B cell (primary cell): ENCODE measurements at regions of chr19 and their contacts with region 1.

Region 1: DNA sequence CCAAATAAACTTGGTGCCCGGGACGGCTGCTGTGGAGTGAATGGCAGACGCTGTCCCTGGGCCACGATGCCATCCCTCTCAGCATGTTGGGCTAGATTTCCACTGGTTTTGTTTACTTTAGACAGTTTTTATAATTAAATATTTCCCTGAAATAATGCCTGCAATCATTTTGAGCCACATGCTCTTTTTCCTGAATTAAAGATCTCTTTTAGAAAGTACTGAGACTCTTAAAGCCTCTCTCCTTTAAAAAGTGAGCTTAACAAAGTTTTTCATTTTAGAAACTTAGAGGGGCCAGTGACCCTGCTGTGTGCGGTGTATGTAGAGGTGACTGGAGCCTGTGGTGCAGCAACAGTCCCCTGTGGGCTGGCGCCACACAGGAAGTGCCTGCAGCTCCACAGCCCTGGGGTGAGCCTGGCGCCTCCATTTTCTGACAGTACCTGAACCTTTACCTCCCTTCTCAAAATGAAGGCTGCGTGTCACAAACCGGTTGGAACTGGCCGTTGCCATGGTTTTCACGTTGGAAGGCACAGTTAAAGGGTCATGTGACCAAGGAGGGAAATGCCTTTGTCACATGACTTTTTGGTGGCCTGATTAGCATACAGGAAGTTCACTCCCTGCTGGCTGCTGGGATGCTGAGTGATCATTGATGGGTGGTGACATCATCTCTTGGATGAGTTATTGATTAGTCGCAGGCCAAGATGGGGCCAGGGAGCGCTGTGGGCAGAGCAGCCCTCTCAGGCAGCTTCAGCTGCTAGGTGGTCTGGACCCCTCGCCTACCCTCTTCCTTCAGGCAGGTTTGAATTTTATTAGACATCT is 26.3 kb downstream of the TSSK6 start:
- DNase-seq: peak; percentile 90
- ATAC-seq: peak; percentile 63
- H3K4me3 ChIP-seq: peak overlapping the region in 1 of 5 experiments; percentile 32
- H3K4me3 Mint-ChIP-seq: peak overlapping the region; percentile 73
- H3K27ac ChIP-seq: peak overlapping the region; percentile 79 to 81
- H3K27ac Mint-ChIP-seq: peak overlapping the region; percentile 98
- H3K4me1 ChIP-seq: peaks cover 37 to 53% of the 10 kb centered on the region in 2 donors
- H3K4me1 Mint-ChIP-seq: peaks cover 56% of the 10 kb centered on the region
- H3K27me3 ChIP-seq: no peaks in the 10 kb centered on the region
- H3K27me3 Mint-ChIP-seq: no peaks in the 10 kb centered on the region
- CTCF ChIP-seq: no peak

Region 2: DNA sequence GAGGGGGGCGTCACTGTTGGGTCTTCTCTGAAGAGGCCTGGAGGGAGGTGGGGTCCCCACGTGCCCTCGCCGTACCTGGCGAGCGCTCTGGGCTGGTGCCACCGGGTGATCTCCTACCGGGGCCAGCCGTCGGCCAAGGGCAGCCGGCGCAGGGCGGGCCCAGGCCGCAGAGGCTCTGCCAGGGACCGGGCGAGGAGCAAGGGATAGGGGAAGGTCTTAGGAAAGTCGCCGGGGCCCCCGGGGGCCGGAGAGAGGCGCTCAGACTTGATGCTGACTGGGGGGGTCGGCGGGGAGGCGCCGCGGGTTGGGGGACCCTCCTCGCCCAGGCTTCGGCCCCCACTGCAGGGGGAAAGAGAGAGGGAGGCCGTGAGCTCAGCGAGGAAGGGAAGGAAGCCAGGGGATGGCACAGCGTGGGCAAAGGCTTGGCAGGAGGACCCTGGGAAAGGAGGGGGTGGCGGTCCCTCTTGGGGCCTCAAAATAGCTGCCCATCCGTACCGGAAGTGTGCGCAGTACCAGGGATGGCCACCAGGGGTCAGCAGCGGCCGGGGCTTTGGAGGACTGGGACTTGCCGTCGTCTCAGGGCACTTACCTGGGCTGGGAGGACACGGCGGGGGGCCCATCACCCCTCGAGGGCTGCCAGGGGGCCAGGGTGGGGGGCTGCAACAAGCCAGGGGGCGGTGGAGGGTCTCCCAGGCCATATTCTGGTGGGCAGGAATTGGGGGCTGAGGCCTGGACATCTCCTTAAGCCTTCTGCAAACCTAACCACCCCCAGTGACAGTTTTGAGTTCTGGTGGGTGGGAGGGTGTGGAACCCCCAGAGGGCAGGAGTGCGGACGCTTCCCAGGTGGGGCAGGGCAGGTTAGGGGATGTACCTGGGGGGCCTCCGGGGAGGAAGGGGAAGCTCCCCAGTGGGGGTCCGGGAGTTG is 343.1 kb before region 1 on chr19:
- CTCF ChIA-PET with region 1: interaction called, 17 read pairs
- POLR2A ChIA-PET with region 1: no interaction called
- intact Hi-C with region 1: no loop called
- DNase-seq: peak; percentile 86
- ATAC-seq: peak; percentile 96
- H3K4me3 ChIP-seq: no peak overlapping the region
- H3K4me3 Mint-ChIP-seq: no peak overlapping the region
- H3K27ac ChIP-seq: no peak overlapping the region
- H3K27ac Mint-ChIP-seq: no peak overlapping the region
- H3K4me1 ChIP-seq: peaks cover 6 to 12% of the 10 kb centered on the region in 2 donors
- H3K4me1 Mint-ChIP-seq: peaks cover 9% of the 10 kb centered on the region
- H3K27me3 ChIP-seq: no peaks in the 10 kb centered on the region
- H3K27me3 Mint-ChIP-seq: no peaks in the 10 kb centered on the region
- CTCF ChIP-seq: peak; percentile 83

Region 3: DNA sequence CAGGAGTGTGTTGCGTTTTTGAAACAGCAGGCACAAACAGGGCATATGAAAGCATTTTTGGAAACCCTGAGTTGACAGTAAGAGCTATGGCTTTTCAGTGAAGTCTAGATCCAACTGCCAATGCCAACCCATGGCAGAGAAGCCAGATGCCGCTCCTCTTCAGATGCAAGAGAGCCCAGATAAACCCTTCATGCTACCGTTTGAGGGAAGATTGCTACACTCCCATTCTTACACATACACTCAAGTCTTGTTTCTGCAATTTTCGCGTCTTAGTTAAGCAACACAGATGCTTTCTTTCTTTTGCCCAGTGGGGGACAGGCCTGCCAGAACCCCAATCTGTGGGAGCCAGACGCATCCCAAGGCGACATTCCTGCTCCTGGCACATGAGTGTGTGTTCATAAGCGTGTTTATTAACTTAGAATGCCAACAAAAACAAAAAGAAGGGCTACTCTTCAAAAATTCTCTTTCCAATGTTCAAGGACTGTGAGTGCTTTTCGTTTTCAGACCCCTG is 307.5 kb before region 1 on chr19:
- CTCF ChIA-PET with region 1: no interaction called
- POLR2A ChIA-PET with region 1: no interaction called
- intact Hi-C with region 1: no loop called
- DNase-seq: no peak
- ATAC-seq: no peak
- H3K4me3 ChIP-seq: no peak overlapping the region
- H3K4me3 Mint-ChIP-seq: no peak overlapping the region
- H3K27ac ChIP-seq: no peak overlapping the region
- H3K27ac Mint-ChIP-seq: no peak overlapping the region
- H3K4me1 ChIP-seq: peaks cover 0 to 11% of the 10 kb centered on the region in 2 donors
- H3K4me1 Mint-ChIP-seq: peaks cover 7% of the 10 kb centered on the region
- H3K27me3 ChIP-seq: no peaks in the 10 kb centered on the region
- H3K27me3 Mint-ChIP-seq: no peaks in the 10 kb centered on the region
- CTCF ChIP-seq: no peak

Region 4: GRCh38 chr19:19320362-19321142 is 168.5 kb before region 1 on chr19 and contains the starts of genes MAU2 and SUGP1:
- CTCF ChIA-PET with region 1: interaction called, 5 read pairs
- POLR2A ChIA-PET with region 1: no interaction called
- intact Hi-C with region 1: loop called (anchors 1 kb)
- DNase-seq: peak; percentile 95
- ATAC-seq: peak; percentile 91
- H3K4me3 ChIP-seq: peak within 1 kb of the TSS; percentile 73 to 97 (median 79)
- H3K4me3 Mint-ChIP-seq: peak within 1 kb of the TSS; percentile 96
- H3K27ac ChIP-seq: peak within 1 kb of the TSS; percentile 96
- H3K27ac Mint-ChIP-seq: peak within 1 kb of the TSS; percentile 99
- H3K4me1 ChIP-seq: peaks cover 18 to 31% of the 10 kb centered on the region in 2 donors
- H3K4me1 Mint-ChIP-seq: peaks cover 44% of the 10 kb centered on the region
- H3K27me3 ChIP-seq: no peaks in the 10 kb centered on the region
- H3K27me3 Mint-ChIP-seq: no peaks in the 10 kb centered on the region
- CTCF ChIP-seq: peak; percentile 26
- total RNA-seq, gene MAU2: 199 and 203 TPM in 2 replicates
- total RNA-seq, gene SUGP1: 86.9 and 91.4 TPM in 2 replicates

Region 5: DNA sequence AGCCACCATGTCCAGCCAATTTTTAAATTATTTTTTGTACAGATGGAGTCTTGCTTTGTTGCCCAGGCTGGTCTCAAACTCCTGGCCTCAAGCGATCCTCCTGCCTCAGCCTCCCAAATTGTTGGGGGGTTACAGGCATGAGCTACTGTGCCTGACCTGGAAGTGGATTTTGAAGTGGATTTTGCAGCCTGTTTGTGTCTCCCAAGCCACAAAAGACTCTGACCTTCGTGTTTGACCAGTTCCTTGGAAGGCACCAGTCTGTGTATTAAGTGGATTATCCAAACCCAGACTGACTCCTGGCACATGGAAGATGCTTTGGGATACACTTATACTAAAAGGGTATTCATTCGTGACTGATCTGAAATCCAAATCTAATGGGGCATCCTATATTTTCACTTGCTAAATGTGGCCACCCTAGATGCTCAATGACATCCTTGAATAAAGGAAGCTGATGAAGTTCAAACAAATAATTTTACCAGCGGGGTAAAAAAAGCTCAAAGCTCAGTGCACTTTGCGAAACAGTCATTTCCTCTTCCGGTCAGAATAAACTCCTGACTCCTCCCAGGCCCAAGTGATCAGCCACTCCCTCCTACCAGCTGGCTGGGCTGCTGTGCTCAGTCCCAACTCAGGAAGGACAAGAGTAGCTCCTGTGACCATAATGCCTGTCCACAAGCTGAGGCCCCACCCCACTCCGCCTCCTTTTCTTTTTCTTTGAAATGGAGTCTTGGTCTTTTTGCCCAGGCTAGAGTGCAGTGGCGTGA is 116.2 kb before region 1 on chr19:
- CTCF ChIA-PET with region 1: interaction called, 301 read pairs
- POLR2A ChIA-PET with region 1: interaction called, 3 read pairs
- intact Hi-C with region 1: no loop called
- DNase-seq: peak; percentile 67
- ATAC-seq: peak; percentile 97
- H3K4me3 ChIP-seq: peak overlapping the region; percentile 14 to 49 (median 26)
- H3K4me3 Mint-ChIP-seq: peak overlapping the region; percentile 74
- H3K27ac ChIP-seq: peak overlapping the region; percentile 74 to 82
- H3K27ac Mint-ChIP-seq: peak overlapping the region; percentile 89
- H3K4me1 ChIP-seq: peaks cover 11 to 22% of the 10 kb centered on the region in 2 donors
- H3K4me1 Mint-ChIP-seq: peaks cover 8% of the 10 kb centered on the region
- H3K27me3 ChIP-seq: no peaks in the 10 kb centered on the region
- H3K27me3 Mint-ChIP-seq: no peaks in the 10 kb centered on the region
- CTCF ChIP-seq: no peak

Region 6: GRCh38 chr19:19404879-19405860 is 83.9 kb before region 1 on chr19 and contains the start of gene GATAD2A:
- CTCF ChIA-PET with region 1: interaction called, 91 read pairs
- POLR2A ChIA-PET with region 1: interaction called, 8 read pairs
- intact Hi-C with region 1: loop called (anchors 1 kb)
- DNase-seq: peak; percentile 96
- ATAC-seq: peak; percentile 88
- H3K4me3 ChIP-seq: peak within 1 kb of the TSS; percentile 55 to 86 (median 70)
- H3K4me3 Mint-ChIP-seq: peak within 1 kb of the TSS; percentile 91
- H3K27ac ChIP-seq: peak within 1 kb of the TSS; percentile 55 to 77
- H3K27ac Mint-ChIP-seq: peak within 1 kb of the TSS; percentile 92
- H3K4me1 ChIP-seq: peaks cover 32 to 37% of the 10 kb centered on the region in 2 donors
- H3K4me1 Mint-ChIP-seq: peaks cover 39% of the 10 kb centered on the region
- H3K27me3 ChIP-seq: no peaks in the 10 kb centered on the region
- H3K27me3 Mint-ChIP-seq: no peaks in the 10 kb centered on the region
- CTCF ChIP-seq: peak; percentile 38
- total RNA-seq, gene GATAD2A: 76.3 and 97.3 TPM in 2 replicates

Region 7: GRCh38 chr19:19459707-19460251 is 29.3 kb before region 1 on chr19:
- CTCF ChIA-PET with region 1: no interaction called
- POLR2A ChIA-PET with region 1: interaction called, 3 read pairs
- intact Hi-C with region 1: loop called (anchors 1 kb)
- DNase-seq: peak; percentile 61
- ATAC-seq: peak; percentile 60
- H3K4me3 ChIP-seq: peak overlapping the region; percentile 11 to 47 (median 39)
- H3K4me3 Mint-ChIP-seq: peak overlapping the region; percentile 80
- H3K27ac ChIP-seq: peak overlapping the region; percentile 74 to 81
- H3K27ac Mint-ChIP-seq: peak overlapping the region; percentile 91
- H3K4me1 ChIP-seq: peaks cover 55 to 68% of the 10 kb centered on the region in 2 donors
- H3K4me1 Mint-ChIP-seq: peaks cover 71% of the 10 kb centered on the region
- H3K27me3 ChIP-seq: no peaks in the 10 kb centered on the region
- H3K27me3 Mint-ChIP-seq: no peaks in the 10 kb centered on the region
- CTCF ChIP-seq: no peak

Region 8: DNA sequence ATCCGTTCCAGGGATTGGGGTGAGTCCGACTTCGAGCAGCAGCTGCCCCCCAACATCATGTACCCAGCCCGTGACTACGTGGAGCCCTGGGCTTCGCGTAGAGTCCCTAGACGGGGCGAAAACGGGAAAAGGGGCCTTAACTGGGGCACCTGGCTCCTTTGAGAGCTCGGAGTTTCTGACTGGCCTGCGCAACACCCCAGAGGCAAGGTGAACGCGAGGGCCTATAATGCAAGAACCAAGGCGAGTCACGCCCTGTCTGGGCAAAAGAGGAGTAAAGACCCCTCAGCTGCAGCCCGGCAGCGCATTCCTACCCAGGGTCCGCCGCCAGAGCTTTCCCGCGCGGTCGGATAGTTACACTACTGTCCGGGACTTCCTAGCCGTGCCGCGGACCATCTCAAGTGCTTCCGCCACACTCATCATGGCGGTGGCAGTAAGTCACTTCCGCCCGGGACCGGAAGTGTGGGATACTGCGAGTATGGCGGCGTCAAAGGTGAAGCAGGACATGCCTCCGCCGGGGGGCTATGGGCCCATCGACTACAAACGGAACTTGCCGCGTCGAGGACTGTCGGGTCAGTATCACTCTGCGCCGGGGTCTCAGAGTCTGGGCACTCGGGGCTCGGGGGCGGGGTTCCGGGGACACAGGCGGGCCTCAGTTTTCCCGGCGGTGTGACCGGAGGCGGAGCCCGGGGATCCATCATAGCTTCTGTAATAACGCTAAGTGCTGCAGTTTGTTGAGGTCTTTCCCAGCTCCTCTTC is 26.9 kb after region 1 on chr19 and contains the start of gene NDUFA13:
- CTCF ChIA-PET with region 1: interaction called, 12 read pairs
- POLR2A ChIA-PET with region 1: no interaction called
- intact Hi-C with region 1: no loop called
- DNase-seq: peak; percentile 96
- ATAC-seq: peak; percentile 94
- H3K4me3 ChIP-seq: peak within 1 kb of the TSS; percentile 82 to 99 (median 95)
- H3K4me3 Mint-ChIP-seq: peak within 1 kb of the TSS; percentile 93
- H3K27ac ChIP-seq: peak within 1 kb of the TSS; percentile 72 to 81
- H3K27ac Mint-ChIP-seq: peak within 1 kb of the TSS; percentile 92
- H3K4me1 ChIP-seq: peaks cover 12 to 23% of the 10 kb centered on the region in 2 donors
- H3K4me1 Mint-ChIP-seq: peaks cover 27% of the 10 kb centered on the region
- H3K27me3 ChIP-seq: no peaks in the 10 kb centered on the region
- H3K27me3 Mint-ChIP-seq: no peaks in the 10 kb centered on the region
- CTCF ChIP-seq: no peak
- total RNA-seq, gene NDUFA13: 170 and 188 TPM in 2 replicates

Region 9: DNA sequence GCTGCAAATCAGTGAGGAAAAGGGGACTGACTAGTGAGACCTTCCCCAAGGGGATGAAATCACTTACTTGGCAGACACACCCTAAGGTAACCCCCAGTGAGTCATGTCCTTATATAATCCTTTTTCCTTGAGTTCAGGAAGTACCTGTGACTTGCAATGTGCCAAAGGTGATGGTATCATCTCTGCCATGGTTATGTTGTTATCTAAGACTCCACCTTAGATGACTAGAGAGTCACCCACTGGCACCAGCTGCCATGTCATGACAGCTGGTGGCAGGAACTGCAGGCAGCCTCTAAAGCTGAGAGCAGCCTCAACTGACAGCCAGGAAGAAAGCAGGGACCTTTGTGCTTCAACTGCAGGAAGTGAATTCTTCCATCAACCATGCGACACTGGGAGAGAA is 116.9 kb after region 1 on chr19:
- CTCF ChIA-PET with region 1: no interaction called
- POLR2A ChIA-PET with region 1: no interaction called
- intact Hi-C with region 1: no loop called
- DNase-seq: no peak
- ATAC-seq: no peak
- H3K4me3 ChIP-seq: no peak overlapping the region
- H3K4me3 Mint-ChIP-seq: no peak overlapping the region
- H3K27ac ChIP-seq: no peak overlapping the region
- H3K27ac Mint-ChIP-seq: peak overlapping the region; percentile 46
- H3K4me1 ChIP-seq: peaks cover 0 to 1% of the 10 kb centered on the region in 2 donors
- H3K4me1 Mint-ChIP-seq: peaks cover 10% of the 10 kb centered on the region
- H3K27me3 ChIP-seq: no peaks in the 10 kb centered on the region
- H3K27me3 Mint-ChIP-seq: no peaks in the 10 kb centered on the region
- CTCF ChIP-seq: no peak